Transverse colon (tissue), 4 donors: ENCODE measurements at regions of chr10 and their contacts with region 1.

Region 1: GRCh38 chr10:124322191-124322980 is 96.3 kb downstream of the OAT start:
- DNase-seq: no peak
- H3K4me3 ChIP-seq: no peak overlapping the region
- H3K27ac ChIP-seq: no peak overlapping the region
- H3K4me1 ChIP-seq: no peaks in the 10 kb centered on the region
- H3K27me3 ChIP-seq: no peaks in the 10 kb centered on the region
- CTCF ChIP-seq: no peak
- EP300 ChIP-seq: no peak
- POLR2A ChIP-seq: no peak

Region 2: DNA sequence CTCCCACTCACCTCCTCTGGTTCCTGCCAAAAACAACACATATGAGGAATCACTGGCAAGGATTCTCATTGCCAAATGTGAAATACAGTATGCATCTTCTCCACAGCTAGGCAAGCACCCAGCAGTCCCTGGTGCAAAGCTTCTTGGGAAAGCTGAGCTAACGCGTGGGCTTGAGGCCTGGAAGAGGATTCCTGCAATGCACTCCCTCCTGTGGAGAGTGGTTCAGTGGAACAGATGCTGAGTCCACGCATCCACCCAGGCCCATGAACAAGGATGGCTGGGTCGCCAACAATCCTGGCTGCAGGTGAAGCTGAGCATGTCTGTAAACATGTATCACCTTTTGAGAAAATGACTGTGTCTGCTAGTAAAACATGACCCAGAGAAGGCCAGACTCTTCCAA is 115.8 kb before region 1 on chr10:
- in situ Hi-C with region 1: no loop called
- intact Hi-C with region 1: no loop called
- DNase-seq: no peak
- H3K4me3 ChIP-seq: no peak overlapping the region
- H3K27ac ChIP-seq: no peak overlapping the region
- H3K4me1 ChIP-seq: no peaks in the 10 kb centered on the region
- H3K27me3 ChIP-seq: no peaks in the 10 kb centered on the region
- CTCF ChIP-seq: no peak
- EP300 ChIP-seq: no peak
- POLR2A ChIP-seq: no peak

Region 3: GRCh38 chr10:124279298-124279697 is 43.1 kb before region 1 on chr10:
- in situ Hi-C with region 1: no loop called
- intact Hi-C with region 1: loop called (anchors 1 kb)
- DNase-seq: no peak
- H3K4me3 ChIP-seq: no peak overlapping the region
- H3K27ac ChIP-seq: no peak overlapping the region
- H3K4me1 ChIP-seq: no peaks in the 10 kb centered on the region
- H3K27me3 ChIP-seq: no peaks in the 10 kb centered on the region
- CTCF ChIP-seq: no peak
- EP300 ChIP-seq: no peak
- POLR2A ChIP-seq: no peak

Region 4: DNA sequence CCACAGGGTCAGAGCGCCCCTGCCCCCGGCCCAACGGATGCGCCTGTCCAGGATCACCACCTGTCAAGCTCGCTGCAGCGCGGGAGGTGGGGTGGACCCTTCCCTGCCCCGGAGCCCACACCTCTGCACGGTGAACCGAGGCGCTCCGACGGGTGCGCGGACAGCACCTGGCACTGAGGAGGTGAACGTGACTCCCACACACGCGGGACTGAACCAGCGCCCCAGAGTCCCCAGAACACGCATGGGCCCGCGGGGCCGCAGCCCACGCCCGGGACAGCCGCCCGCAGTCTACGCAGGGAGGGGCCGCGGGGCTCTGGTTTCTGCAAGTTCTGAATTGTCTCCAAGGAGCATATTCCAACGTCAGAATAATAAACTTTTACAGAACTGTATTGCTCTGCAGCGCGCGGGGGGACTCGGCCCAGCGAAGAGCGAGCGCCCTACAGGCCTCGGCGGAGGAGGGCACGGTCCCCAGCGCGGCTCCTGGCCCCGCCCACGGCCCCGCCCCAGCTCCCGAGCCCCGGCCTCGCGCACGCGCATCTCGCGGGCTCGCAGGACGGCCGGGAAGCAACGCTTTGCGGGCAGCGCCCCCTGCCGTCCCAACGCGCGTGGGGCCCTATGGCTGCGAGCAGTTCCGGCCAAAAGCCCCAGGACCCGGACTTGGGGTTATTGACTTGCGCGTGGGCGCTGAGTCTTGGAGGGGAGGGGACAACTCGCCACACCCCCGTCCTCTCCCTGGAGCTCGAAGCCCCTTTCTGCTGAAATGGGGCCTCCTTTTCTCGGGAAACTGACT is 66.6 kb after region 1 on chr10:
- in situ Hi-C with region 1: no loop called
- intact Hi-C with region 1: no loop called
- DNase-seq: peak; percentile 94
- H3K4me3 ChIP-seq: peak overlapping the region; percentile 34 to 59 (median 40)
- H3K27ac ChIP-seq: peak overlapping the region; percentile 17 to 68 (median 45)
- H3K4me1 ChIP-seq: peaks cover 3 to 12% (median 10%) of the 10 kb centered on the region in 4 donors
- H3K27me3 ChIP-seq: no peaks in the 10 kb centered on the region
- CTCF ChIP-seq: peak; percentile 85 to 97 (median 95)
- EP300 ChIP-seq: no peak
- POLR2A ChIP-seq: no peak

Region 5: GRCh38 chr10:124612611-124613498 is 290.5 kb after region 1 on chr10:
- in situ Hi-C with region 1: no loop called
- intact Hi-C with region 1: no loop called
- DNase-seq: no peak
- H3K4me3 ChIP-seq: no peak overlapping the region
- H3K27ac ChIP-seq: peak overlapping the region in 3 of 4 donors; percentile 5 to 27 (median 24)
- H3K4me1 ChIP-seq: peaks cover 0 to 20% (median 7%) of the 10 kb centered on the region in 4 donors
- H3K27me3 ChIP-seq: no peaks in the 10 kb centered on the region
- CTCF ChIP-seq: no peak
- EP300 ChIP-seq: no peak
- POLR2A ChIP-seq: no peak